Activated CD4-positive, alpha-beta T cell treated with anti-CD3 and anti-CD28 coated beads, Interleukin-2, amount 10 ng/mL, durations not matched to agents 24 days and 14 days (primary cell): ENCODE measurements at regions of chr16 and their contacts with region 1.

Region 1: DNA sequence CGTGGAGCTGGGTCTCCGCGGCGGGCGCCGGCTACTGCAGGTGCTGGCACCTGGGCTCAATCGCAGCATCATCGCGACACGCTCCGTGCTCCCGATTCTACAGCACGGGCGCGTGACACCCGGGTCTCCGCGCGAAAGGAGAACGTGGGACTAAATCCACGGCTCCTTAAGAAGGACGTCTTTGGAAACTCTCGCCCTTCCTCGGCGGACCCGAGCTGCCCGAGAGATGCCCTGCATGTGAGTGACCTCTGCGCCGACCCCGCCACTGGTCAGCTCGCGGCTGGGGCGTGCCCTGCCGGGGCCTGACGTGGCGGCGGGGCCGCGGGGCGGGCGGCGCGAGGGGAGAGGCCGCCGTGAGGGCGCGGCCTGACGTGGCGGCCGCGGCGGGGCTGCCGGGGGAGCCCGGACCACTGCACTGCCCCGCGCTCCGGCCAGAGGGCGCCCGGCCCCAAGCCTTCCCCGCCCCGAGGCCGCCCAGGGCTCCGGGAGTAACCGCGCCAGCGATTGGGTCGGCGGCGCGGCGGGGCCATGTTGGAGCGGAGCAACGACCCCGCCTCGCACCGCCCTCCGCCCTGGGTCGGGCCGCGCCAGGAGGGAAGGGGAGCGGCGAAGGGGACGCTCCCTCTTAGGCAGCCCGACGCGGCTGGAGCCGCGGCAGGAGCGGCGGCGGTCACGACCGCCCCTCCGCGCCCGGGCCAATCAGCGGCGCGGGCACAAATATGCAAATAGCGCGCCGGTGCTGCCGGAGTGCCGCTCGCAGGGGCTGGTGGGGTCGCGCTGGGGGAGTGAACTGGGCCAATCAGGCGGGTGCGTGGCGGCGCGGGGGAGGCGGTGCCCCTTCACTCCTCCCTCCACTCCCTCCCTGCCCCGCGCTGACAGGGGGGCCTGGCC is 75.6 kb downstream of the CHD9 start:
- DNase-seq: peak; percentile 98
- H3K4me3 Mint-ChIP-seq: peak overlapping the region; percentile 86
- H3K27ac Mint-ChIP-seq: peak overlapping the region; percentile 77
- H3K4me1 Mint-ChIP-seq: peaks cover 8% of the 10 kb centered on the region
- H3K27me3 Mint-ChIP-seq: no peaks in the 10 kb centered on the region

Region 2: GRCh38 chr16:53061701-53062159 is 68.7 kb before region 1 on chr16:
- intact Hi-C with region 1: loop called (anchors 2 kb)
- DNase-seq: peak; percentile 74
- H3K4me3 Mint-ChIP-seq: peak overlapping the region; percentile 22
- H3K27ac Mint-ChIP-seq: peak overlapping the region; percentile 3
- H3K4me1 Mint-ChIP-seq: peaks cover 30% of the 10 kb centered on the region
- H3K27me3 Mint-ChIP-seq: no peaks in the 10 kb centered on the region

Region 3: GRCh38 chr16:53099318-53100130 is 30.9 kb before region 1 on chr16:
- intact Hi-C with region 1: loop called (anchors 1 kb)
- DNase-seq: peak; percentile 84
- H3K4me3 Mint-ChIP-seq: peak overlapping the region; percentile 81
- H3K27ac Mint-ChIP-seq: peak overlapping the region; percentile 93
- H3K4me1 Mint-ChIP-seq: peaks cover 17% of the 10 kb centered on the region
- H3K27me3 Mint-ChIP-seq: no peaks in the 10 kb centered on the region

Region 4: GRCh38 chr16:53257001-53257400 is 126.6 kb after region 1 on chr16:
- intact Hi-C with region 1: no loop called
- DNase-seq: no peak
- H3K4me3 Mint-ChIP-seq: no peak overlapping the region
- H3K27ac Mint-ChIP-seq: no peak overlapping the region
- H3K4me1 Mint-ChIP-seq: no peaks in the 10 kb centered on the region
- H3K27me3 Mint-ChIP-seq: no peaks in the 10 kb centered on the region

Region 5: DNA sequence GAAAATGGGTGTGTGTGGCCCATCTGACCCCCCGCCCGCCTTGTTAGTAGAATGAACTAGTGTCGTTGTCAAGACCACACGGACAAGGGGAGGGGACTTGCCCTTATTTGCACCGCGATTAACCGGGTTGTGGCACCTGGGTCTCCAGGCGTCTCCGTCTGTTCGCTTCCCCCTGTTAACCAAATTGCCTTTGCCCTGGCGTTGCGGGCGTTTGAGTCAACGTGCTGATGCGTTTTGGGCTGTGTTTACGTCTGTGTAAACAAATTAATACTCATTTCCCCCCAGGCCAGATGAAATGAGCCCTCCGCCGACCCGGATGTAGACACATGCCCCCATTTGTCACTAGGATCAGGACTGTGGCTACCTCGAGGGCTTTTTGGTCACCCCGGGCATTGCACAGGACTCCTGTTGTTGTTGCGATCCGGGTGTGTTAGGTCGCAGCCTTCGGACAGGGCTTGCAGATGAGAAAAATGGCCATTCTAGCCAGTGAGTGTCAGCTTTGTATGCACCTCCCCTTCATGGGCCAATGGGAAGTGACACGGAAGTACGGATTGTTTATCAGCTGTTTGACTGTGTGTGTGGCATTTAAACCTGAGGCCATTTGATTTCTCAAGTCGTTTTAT is 304.8 kb after region 1 on chr16:
- intact Hi-C with region 1: loop called (anchors 2 kb)
- DNase-seq: peak; percentile 91
- H3K4me3 Mint-ChIP-seq: peak overlapping the region; percentile 96
- H3K27ac Mint-ChIP-seq: peak overlapping the region; percentile 93
- H3K4me1 Mint-ChIP-seq: peaks cover 31% of the 10 kb centered on the region
- H3K27me3 Mint-ChIP-seq: no peaks in the 10 kb centered on the region

Region 6: GRCh38 chr16:53509906-53510703 is 379.7 kb after region 1 on chr16:
- intact Hi-C with region 1: loop called (anchors 2 kb)
- DNase-seq: peak; percentile 85
- H3K4me3 Mint-ChIP-seq: no peak overlapping the region
- H3K27ac Mint-ChIP-seq: no peak overlapping the region
- H3K4me1 Mint-ChIP-seq: peaks cover 20% of the 10 kb centered on the region
- H3K27me3 Mint-ChIP-seq: peaks cover 2% of the 10 kb centered on the region